Vagina (tissue), 2 donors: ENCODE measurements at regions of chr11 and their contacts with region 1.

Region 1: DNA sequence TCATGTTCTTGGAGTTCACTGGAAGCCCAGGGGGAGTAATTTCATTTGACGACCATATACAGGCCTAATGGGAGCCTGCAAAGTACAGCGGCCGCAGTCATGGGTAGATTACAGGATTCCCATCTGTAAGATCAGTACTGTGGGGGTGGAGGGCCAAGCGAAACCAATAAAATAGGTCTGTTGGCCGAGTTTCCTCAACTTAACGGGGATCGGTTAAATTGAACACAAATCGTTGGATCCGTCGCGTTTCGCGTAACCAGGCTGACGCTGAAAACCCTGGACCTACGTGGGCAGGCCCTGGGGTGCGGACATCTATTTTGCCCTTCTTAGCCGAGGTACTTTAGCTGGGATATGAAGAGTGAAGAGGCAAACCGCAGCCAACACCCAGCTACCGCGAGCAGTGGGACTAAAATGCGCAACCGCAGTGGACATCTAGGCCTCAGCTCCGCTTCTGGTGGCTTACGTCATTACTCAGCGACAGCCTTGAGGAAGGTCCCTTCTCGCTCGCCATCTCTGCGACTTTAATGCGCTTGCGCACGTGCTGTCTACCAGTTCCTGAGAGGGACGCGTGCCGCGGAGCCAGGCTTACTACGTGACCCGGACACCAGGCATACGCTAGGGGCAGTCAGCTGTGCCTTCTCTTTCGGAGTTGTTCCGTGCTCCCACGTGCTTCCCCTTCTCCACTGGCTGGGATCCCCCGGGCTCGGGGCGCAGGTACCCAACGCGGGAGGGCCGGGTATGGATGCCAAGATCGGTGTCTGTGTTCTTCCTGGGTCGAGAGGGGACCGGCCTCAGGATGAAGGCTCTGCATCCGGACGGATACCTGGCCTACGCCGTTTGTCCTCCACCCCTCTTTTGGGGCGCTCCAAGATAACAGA is at the start of gene NAT10:
- DNase-seq: peak; percentile 97 to 98
- H3K4me3 ChIP-seq: peak within 1 kb of the TSS; percentile 61 to 68
- H3K27ac ChIP-seq: peak within 1 kb of the TSS; percentile 83
- H3K4me1 ChIP-seq: peaks cover 21% of the 10 kb centered on the region
- H3K27me3 ChIP-seq: no peaks in the 10 kb centered on the region
- CTCF ChIP-seq: peak in 1 of 3 experiments; percentile 22
- POLR2A ChIP-seq: peak in 1 of 2 donors; percentile 46
- total RNA-seq, gene NAT10: 24.8 TPM

Region 2: DNA sequence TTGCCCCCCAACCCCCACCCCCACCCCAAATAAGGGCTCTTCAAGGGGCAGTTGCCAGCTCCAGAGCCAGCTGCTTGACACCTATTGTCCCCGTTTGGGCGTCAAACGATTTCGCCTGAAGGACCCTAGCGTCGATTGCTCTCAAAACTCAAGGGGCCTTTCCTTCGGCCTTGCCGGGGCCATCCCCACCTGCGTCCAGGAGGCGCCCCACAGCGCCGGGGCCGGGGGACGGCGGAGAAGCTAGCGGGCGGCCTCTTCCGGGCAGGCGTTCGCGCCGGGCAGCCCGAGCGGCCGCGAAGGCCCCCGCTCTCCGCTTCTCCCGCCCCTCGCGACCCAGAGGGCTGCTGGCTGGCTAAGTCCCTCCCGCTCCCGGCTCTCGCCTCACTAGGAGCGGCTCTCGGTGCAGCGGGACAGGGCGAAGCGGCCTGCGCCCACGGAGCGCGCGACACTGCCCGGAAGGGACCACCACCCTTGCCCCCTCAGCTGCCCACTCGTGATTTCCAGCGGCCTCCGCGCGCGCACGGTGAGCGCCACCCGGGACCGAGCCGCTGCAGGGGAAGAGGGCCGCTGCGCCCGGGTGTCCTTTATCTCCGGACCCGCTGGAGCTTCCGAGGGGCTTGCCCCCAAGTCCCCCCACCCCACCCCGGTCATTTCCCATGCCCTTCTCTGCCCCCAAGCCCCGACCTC is 53.8 kb before region 1 on chr11 and contains the start of gene CAPRIN1:
- intact Hi-C with region 1: loop called (anchors 5 kb)
- DNase-seq: peak in 1 of 2 donors; percentile 87
- H3K4me3 ChIP-seq: peak within 1 kb of the TSS; percentile 77 to 96
- H3K27ac ChIP-seq: peak within 1 kb of the TSS; percentile 95
- H3K4me1 ChIP-seq: peaks cover 41% of the 10 kb centered on the region
- H3K27me3 ChIP-seq: no peaks in the 10 kb centered on the region
- CTCF ChIP-seq: no peak
- POLR2A ChIP-seq: peak in 1 of 2 donors; percentile 71
- total RNA-seq, gene CAPRIN1: 123 TPM

Region 3: GRCh38 chr11:34161812-34162499 is 56.6 kb after region 1 on chr11:
- intact Hi-C with region 1: no loop called
- DNase-seq: no peak
- H3K4me3 ChIP-seq: no peak overlapping the region
- H3K27ac ChIP-seq: no peak overlapping the region
- H3K4me1 ChIP-seq: no peaks in the 10 kb centered on the region
- H3K27me3 ChIP-seq: no peaks in the 10 kb centered on the region
- CTCF ChIP-seq: no peak
- POLR2A ChIP-seq: no peak

Region 4: GRCh38 chr11:34214961-34215805 is 109.9 kb after region 1 on chr11:
- intact Hi-C with region 1: no loop called
- DNase-seq: no peak
- H3K4me3 ChIP-seq: no peak overlapping the region
- H3K27ac ChIP-seq: no peak overlapping the region
- H3K4me1 ChIP-seq: peaks cover 7% of the 10 kb centered on the region
- H3K27me3 ChIP-seq: no peaks in the 10 kb centered on the region
- CTCF ChIP-seq: no peak
- POLR2A ChIP-seq: no peak

Region 5: GRCh38 chr11:34427186-34427805 is 322.0 kb after region 1 on chr11:
- intact Hi-C with region 1: no loop called
- DNase-seq: no peak
- H3K4me3 ChIP-seq: no peak overlapping the region
- H3K27ac ChIP-seq: no peak overlapping the region
- H3K4me1 ChIP-seq: peaks cover 11% of the 10 kb centered on the region
- H3K27me3 ChIP-seq: no peaks in the 10 kb centered on the region
- CTCF ChIP-seq: no peak
- POLR2A ChIP-seq: no peak